A673 (cell line): ENCODE measurements at regions of chr11 and their contacts with region 1.

Region 1: GRCh38 chr11:110200241-110200640 is 96.2 kb downstream of the RDX start:
- DNase-seq: no peak
- H3K4me3 ChIP-seq: no peak overlapping the region
- H3K27ac ChIP-seq: peak overlapping the region; percentile 16
- H3K4me1 ChIP-seq: peaks cover 38% of the 10 kb centered on the region
- H3K27me3 ChIP-seq: no peaks in the 10 kb centered on the region
- CTCF ChIP-seq: no peak

Region 2: DNA sequence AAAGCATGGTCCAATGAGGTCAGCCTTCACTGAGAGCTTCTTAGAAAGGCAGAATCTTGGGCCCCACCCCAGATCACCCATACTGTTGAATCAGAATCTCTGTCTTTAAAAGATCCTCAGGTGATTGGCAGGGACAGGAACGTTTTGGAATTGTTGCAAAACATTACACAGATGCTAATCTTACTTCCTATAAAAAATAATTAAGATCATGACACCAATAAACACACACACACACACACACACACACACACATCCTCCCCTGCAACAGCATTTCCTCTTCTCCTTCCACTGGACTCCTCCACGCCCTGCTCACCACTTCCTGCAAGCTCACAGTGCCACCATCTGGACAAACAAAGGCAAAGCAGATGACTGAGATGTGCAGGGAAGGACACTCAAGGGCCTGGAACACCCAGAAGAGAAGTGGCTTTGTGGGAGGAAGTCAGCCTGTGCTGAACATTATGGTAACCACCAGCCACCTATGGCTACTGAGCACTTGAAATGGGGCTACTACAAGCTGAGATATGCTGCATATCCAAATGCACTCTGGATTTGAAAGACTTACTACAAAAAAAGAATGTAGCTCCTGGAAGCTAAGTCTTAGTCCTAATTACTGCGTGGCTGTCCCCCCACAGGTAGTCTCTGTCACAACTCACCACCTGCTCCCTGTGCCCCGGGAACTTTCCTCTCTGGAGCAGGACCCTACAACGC is 1246.3 kb after region 1 on chr11:
- CTCF ChIA-PET with region 1: no interaction called
- POLR2A ChIA-PET with region 1: interaction called, 4 read pairs
- intact Hi-C with region 1: loop called (anchors 2 kb)
- DNase-seq: peak; percentile 95
- H3K4me3 ChIP-seq: no peak overlapping the region
- H3K27ac ChIP-seq: no peak overlapping the region
- H3K4me1 ChIP-seq: peaks cover 5% of the 10 kb centered on the region
- H3K27me3 ChIP-seq: no peaks in the 10 kb centered on the region
- CTCF ChIP-seq: peak; percentile 98